H1 (cell line): ENCODE measurements at regions of chr1 and their contacts with region 1.

Region 1: GRCh38 chr1:156129706-156130581 is 15.4 kb downstream of the LMNA start:
- DNase-seq: peak; percentile 95 to 98
- H3K4me3 ChIP-seq: 0 out of 8 replicates have a peak overlapping the region, but pooled peaks of 1 of the 4 experiments have one; percentile 5
- H3K27ac ChIP-seq: peak overlapping the region; percentile 88
- H3K4me1 ChIP-seq: peaks cover 6 to 21% (median 10%) of the 10 kb centered on the region in 4 experiments
- H3K27me3 ChIP-seq: no peaks in the 10 kb centered on the region
- CTCF ChIP-seq: peak; percentile 96 to 99 (median 99)
- EP300 ChIP-seq: peak in 1 of 2 experiments; percentile 26; a peak in 1 of 3 replicates
- POLR2A ChIP-seq: peak in 1 of 2 experiments; percentile 71; a peak in 2 of 3 replicates
- RAD21 ChIP-seq: peak; percentile 96 to 100

Region 2: GRCh38 chr1:156020292-156021089 is 109.5 kb before region 1 on chr1 and contains the start of gene SSR2:
- CTCF ChIA-PET with region 1: interaction called, 10 read pairs
- POLR2A ChIA-PET with region 1: interaction called, 3 read pairs
- DNase-seq: peak; percentile 73 to 84
- H3K4me3 ChIP-seq: peak within 1 kb of the TSS; percentile 92 to 97 (median 94)
- H3K27ac ChIP-seq: no peak within 1 kb of the TSS
- H3K4me1 ChIP-seq: peaks cover 0 to 3% (median under 1%) of the 10 kb centered on the region in 4 experiments; a peak in 3 of 7 replicates
- H3K27me3 ChIP-seq: peaks cover 0 to 4% (median under 1%) of the 10 kb centered on the region in 4 experiments; a peak in 1 of 7 replicates
- CTCF ChIP-seq: no peak
- EP300 ChIP-seq: no peak
- POLR2A ChIP-seq: peak in 1 of 2 experiments; percentile 74; a peak in 2 of 3 replicates
- RAD21 ChIP-seq: no peak
- total RNA-seq, gene SSR2: 190 and 196 TPM in 2 replicates

Region 3: DNA sequence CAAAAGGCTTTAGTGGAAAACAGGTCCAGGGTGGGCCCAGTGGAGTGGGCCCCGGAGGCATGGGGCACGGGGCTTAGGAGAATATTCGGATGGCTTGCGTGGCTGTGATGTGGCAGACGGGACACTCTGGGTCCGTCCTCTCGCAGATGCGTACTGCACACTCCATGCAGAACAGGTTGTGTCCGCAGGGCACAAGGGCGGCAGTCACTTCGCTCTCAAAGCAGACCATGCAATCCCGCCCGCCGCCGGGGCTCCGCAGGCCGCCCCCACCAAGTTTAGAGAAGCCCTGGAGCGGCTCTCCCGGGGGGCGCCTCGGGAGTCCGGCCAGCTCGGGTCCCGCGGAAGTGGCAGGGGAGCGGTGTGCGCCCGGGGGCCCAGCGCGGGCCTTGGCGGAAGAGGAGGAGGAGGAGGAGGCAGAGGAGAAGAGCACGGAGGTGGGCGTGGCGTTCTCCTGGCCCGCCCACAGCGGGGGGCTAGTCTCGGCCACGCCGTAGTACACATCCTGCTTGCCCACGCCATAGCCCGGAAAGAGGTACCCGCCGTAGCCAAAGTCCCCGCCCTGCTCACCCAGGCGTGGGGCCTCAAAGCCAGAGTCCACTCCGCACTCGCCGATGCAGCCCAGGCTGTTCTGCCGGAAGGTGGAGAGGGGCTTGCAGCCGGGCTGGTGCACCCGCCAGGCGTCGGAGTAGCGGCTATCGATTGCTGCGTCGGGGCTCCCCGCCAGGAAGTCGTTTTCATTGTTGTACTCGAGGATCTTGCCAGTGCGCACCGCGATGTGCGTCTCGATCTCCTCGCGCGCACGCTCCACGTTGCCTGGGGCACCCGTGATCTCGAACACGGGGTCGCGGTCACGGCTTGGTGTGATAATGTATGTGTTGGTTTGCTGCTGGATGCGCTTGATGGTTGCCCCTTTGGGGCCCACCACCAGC is 53.2 kb before region 1 on chr1:
- CTCF ChIA-PET with region 1: interaction called, 1,994 read pairs
- POLR2A ChIA-PET with region 1: interaction called, 763 read pairs
- DNase-seq: peak in 1 of 2 experiments; percentile 84
- H3K4me3 ChIP-seq: peak overlapping the region in 3 of 4 experiments; percentile 2 to 44 (median 4); a peak in 5 of 8 replicates
- H3K27ac ChIP-seq: peak overlapping the region; percentile 53; the same call in 1 of the 2 replicates
- H3K4me1 ChIP-seq: peaks cover 24 to 57% (median 48%) of the 10 kb centered on the region in 4 experiments
- H3K27me3 ChIP-seq: no peaks in the 10 kb centered on the region
- CTCF ChIP-seq: no peak
- EP300 ChIP-seq: no peak
- POLR2A ChIP-seq: no peak
- RAD21 ChIP-seq: no peak

Region 4: GRCh38 chr1:156146020-156146768 is 16.2 kb after region 1 on chr1:
- CTCF ChIA-PET with region 1: interaction called, 106 read pairs
- POLR2A ChIA-PET with region 1: interaction called, 6 read pairs
- DNase-seq: no peak
- H3K4me3 ChIP-seq: peak overlapping the region in 1 of 4 experiments; percentile 35; a peak in 3 of 8 replicates
- H3K27ac ChIP-seq: peak overlapping the region; percentile 17; the same call in 1 of the 2 replicates
- H3K4me1 ChIP-seq: peaks cover 20 to 39% (median 29%) of the 10 kb centered on the region in 4 experiments
- H3K27me3 ChIP-seq: no peaks in the 10 kb centered on the region
- CTCF ChIP-seq: peak in 2 of 3 experiments; percentile 60 to 62; a peak in 3 of 4 replicates
- EP300 ChIP-seq: no peak
- POLR2A ChIP-seq: no peak
- RAD21 ChIP-seq: peak; percentile 74 to 79

Region 5: GRCh38 chr1:156245451-156246232 is 115.7 kb after region 1 on chr1:
- CTCF ChIA-PET with region 1: interaction called, 1,265 read pairs
- POLR2A ChIA-PET with region 1: interaction called, 3 read pairs
- DNase-seq: peak in 1 of 2 experiments; percentile 54
- H3K4me3 ChIP-seq: peak overlapping the region in 3 of 4 experiments; percentile 7 to 40 (median 10); a peak in 5 of 8 replicates
- H3K27ac ChIP-seq: no peak overlapping the region
- H3K4me1 ChIP-seq: peaks cover 0 to 16% (median 9%) of the 10 kb centered on the region in 4 experiments
- H3K27me3 ChIP-seq: no peaks in the 10 kb centered on the region
- CTCF ChIP-seq: no peak
- EP300 ChIP-seq: no peak
- POLR2A ChIP-seq: no peak
- RAD21 ChIP-seq: no peak

Region 6: GRCh38 chr1:156319664-156320063 is 189.7 kb after region 1 on chr1:
- CTCF ChIA-PET with region 1: no interaction called
- POLR2A ChIA-PET with region 1: no interaction called
- DNase-seq: no peak
- H3K4me3 ChIP-seq: no peak overlapping the region
- H3K27ac ChIP-seq: no peak overlapping the region
- H3K4me1 ChIP-seq: no peaks in the 10 kb centered on the region
- H3K27me3 ChIP-seq: no peaks in the 10 kb centered on the region
- CTCF ChIP-seq: peak in 1 of 3 experiments; percentile 15; a peak in 2 of 4 replicates
- EP300 ChIP-seq: no peak
- POLR2A ChIP-seq: no peak
- RAD21 ChIP-seq: peak in 1 of 2 experiments; percentile 33; a peak in 1 of 4 replicates